GM10248 (cell line): ENCODE measurements at regions of chr11 and their contacts with region 1.

Region 1: DNA sequence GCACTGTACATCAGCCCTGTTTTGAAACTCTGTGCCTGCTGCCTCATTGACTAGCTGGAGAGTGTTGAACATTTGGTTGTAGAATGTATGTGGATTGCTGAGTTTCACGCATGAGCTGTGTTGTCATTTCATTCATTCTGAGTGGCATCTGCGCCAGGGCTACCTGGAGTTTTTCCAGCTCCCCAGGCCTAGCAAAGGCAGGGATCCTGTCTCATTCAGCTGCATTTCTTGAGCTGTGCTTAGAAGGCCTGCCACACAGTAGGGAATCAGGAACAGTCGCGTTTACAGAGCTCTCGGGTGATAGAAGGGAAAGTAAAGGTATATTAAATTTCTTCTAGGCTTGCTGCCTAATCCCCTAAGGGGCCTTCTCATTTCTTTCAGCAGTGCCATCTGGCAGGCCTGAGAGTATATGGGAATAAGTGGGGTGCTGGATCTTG is 44.3 kb downstream of the PTPRJ start:
- DNase-seq: no peak
- CTCF ChIP-seq: no peak

Region 2: DNA sequence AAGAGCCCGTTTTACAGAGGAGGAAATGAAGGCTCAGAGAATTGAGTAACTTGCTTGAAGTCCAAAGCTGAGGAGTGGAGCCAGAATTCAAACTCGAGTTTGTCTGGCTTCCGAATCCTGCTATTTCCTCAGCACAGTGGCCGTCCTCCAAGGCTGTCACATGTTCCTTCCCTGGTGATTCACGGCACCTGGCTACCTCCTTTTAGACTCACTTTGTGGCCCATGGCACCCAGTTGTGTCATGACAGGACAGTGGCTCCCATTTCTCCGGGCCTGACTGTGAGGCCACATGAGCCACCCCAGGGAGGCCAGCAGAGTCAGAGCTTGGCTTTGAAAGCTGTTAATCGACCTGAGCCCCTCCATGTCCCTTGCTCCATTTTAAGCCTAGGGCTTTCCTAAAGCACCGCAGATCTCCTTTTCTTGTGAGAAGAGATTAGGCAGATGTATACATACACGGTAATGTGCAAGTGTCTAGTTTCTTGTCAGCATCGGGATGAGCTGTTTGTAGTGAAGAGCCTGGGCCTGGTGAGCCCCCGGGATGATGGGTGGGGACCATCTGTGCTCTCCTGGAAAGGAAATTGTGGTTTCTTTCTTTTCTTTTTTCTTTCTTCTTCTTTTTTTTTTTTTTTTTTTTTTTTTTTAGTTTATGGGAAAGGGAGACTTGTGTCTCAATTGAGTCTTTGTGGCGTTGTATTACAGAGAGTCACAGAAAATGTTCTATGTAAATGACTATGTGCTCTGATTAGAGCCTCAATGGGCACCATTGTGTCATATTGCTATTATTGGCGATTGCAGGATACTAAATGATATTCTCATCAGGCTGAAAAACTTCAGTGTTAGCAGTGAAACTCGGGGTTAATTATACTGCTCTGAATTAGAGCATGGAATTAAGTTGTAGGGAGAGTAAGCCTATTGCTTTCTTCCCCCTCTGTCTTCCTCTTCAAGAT is 10.5 kb after region 1 on chr11:
- CTCF ChIA-PET with region 1: interaction called, 13 read pairs
- POLR2A ChIA-PET with region 1: no interaction called
- DNase-seq: no peak
- CTCF ChIP-seq: no peak

Region 3: GRCh38 chr11:48063424-48063978 is 38.8 kb after region 1 on chr11:
- CTCF ChIA-PET with region 1: no interaction called
- POLR2A ChIA-PET with region 1: no interaction called
- DNase-seq: peak; percentile 34
- CTCF ChIP-seq: no peak